IMR-90 (cell line): ENCODE measurements at regions of chr1 and their contacts with region 1.

Region 1: GRCh38 chr1:21919520-21919919 is 17.6 kb downstream of the HSPG2 start:
- DNase-seq: peak; percentile 86
- ATAC-seq: peak; percentile 64
- H3K4me3 ChIP-seq: no peak overlapping the region
- H3K27ac ChIP-seq: peak overlapping the region; percentile 59; the same call in 1 of the 2 replicates
- H3K4me1 ChIP-seq: peaks cover 35% of the 10 kb centered on the region
- H3K27me3 ChIP-seq: no peaks in the 10 kb centered on the region
- CTCF ChIP-seq: no peak
- POLR2A ChIP-seq: no peak
- RAD21 ChIP-seq: no peak

Region 2: GRCh38 chr1:22131875-22132486 is 212.5 kb after region 1 on chr1:
- CTCF ChIA-PET with region 1: no interaction called
- POLR2A ChIA-PET with region 1: no interaction called
- dilution Hi-C with region 1: no loop called
- in situ Hi-C with region 1: no loop called
- intact Hi-C with region 1: loop called (anchors 5 kb)
- DNase-seq: no peak
- ATAC-seq: peak; percentile 30
- H3K4me3 ChIP-seq: no peak overlapping the region
- H3K27ac ChIP-seq: no peak overlapping the region
- H3K4me1 ChIP-seq: peaks cover 4% of the 10 kb centered on the region
- H3K27me3 ChIP-seq: peaks cover 6% of the 10 kb centered on the region
- CTCF ChIP-seq: peak; percentile 50
- POLR2A ChIP-seq: no peak
- RAD21 ChIP-seq: peak; percentile 43